Sciatic nerve (tissue), 2 donors: ENCODE measurements at regions of chr20 and their contacts with region 1.

Region 1: GRCh38 chr20:21663465-21663864 is 42.0 kb upstream of the PAX1 start:
- DNase-seq: no peak
- ATAC-seq: no peak

Region 2: DNA sequence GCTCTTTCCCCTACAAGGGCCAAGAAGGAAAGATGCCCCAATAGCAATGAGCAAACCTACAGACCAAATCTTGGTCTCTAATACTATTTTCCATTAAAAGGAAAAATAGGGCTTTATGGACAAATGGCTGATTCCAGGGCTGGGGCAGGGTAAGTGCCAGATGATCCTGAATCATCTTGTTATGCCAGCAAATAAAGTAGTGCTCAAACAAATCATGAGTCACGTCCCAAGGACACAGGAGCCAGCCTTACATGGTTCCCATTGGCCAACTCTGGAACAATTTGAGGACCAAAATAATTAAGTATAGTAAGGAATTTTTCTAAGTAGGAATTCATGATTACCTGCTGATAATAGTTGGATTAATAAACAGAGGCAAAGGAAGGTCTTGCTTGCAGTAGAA is 212.9 kb before region 1 on chr20:
- intact Hi-C with region 1: no loop called
- DNase-seq: no peak
- ATAC-seq: no peak

Region 3: GRCh38 chr20:21693322-21693721 is 29.9 kb after region 1 on chr20:
- intact Hi-C with region 1: loop called (anchors 2 kb)
- DNase-seq: no peak
- ATAC-seq: no peak